ENCODE measurements at regions of chr17 and their contacts with region 1.

Region 1: GRCh38 chr17:21304091-21304490 is 19.6 kb downstream of the MAP2K3 start:
- DNase-seq: peak; percentile 41 to 77
- ATAC-seq: peak; percentile 4
- H3K4me3 ChIP-seq: no peak overlapping the region
- H3K27ac ChIP-seq: no peak overlapping the region
- H3K4me1 ChIP-seq: no peaks in the 10 kb centered on the region
- H3K27me3 ChIP-seq: no peaks in the 10 kb centered on the region

Region 2: DNA sequence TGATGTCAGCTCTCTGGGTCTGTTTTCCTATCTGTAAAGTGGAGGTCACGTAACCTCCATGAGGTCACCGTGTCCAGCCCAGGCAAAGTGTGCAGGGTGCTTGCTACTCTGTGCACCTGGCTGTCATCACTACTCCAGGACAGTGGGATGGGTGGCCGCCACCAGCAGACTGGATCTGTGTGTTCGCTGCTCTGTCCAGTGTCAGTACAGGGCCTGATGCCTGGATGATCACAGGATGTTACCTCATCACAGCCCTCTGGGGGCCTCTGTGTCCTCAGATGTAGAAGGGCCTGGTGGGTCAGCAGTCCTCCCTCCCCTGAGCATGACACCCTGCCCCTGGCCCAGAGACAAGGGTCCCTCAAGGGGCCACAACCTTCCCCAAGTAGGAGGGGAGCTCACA is 468.2 kb after region 1 on chr17:
- intact Hi-C with region 1: loop called in 1 of 2 experiments (anchors 5 kb)
- DNase-seq: no peak
- ATAC-seq: no peak
- H3K4me3 ChIP-seq: no peak overlapping the region
- H3K27ac ChIP-seq: no peak overlapping the region
- H3K4me1 ChIP-seq: no peaks in the 10 kb centered on the region
- H3K27me3 ChIP-seq: no peaks in the 10 kb centered on the region

Measured in aorta (tissue), 5 donors.